Activated CD4-positive, alpha-beta T cell treated with anti-CD3 and anti-CD28 coated beads, Interleukin-2, amount 10 ng/mL, durations not matched to agents 24 days and 14 days (primary cell): ENCODE measurements at regions of chr5 and their contacts with region 1.

Region 1: DNA sequence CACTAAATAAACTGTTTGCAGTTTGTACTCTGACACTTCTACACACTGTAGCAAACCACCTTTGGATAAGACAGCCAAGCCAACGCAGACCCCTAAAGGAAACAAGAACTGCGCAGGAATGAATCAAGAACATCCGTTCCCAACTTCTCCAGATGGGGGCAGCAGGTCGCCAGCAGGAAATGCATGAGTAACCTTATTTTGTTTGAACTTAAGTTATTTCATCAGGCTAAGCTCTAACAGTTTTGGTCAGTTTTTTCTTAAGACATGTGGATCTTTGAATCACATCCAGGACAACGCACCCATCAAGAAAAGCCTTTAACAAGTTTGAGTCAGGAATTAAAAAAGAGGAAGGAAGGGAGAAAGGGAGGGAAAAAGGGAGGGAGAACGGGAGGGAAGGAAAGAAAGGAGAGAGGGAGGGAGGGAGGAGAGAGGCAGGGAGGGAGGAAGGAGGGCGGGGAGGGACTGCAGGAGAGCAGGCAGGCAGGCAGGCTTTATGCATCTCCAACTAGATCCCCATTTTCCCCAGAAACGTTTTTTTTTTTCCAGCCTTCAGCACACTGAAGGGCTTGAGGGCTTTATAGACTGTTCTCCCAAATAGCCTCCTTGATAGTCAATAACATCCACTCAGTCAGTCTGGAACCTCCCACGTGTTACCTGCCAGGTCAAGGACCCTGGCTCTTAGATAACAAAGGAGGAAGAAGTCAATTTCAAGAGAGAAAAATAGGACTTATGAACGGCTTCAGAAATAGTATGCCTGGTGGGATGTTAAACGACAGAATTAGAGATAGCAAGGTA is 22.2 kb downstream of the BHMT start:
- DNase-seq: peak; percentile 88
- H3K4me3 Mint-ChIP-seq: peak overlapping the region; percentile 41
- H3K27ac Mint-ChIP-seq: peak overlapping the region; percentile 69
- H3K4me1 Mint-ChIP-seq: peaks cover 5% of the 10 kb centered on the region
- H3K27me3 Mint-ChIP-seq: peaks cover 1% of the 10 kb centered on the region

Region 2: DNA sequence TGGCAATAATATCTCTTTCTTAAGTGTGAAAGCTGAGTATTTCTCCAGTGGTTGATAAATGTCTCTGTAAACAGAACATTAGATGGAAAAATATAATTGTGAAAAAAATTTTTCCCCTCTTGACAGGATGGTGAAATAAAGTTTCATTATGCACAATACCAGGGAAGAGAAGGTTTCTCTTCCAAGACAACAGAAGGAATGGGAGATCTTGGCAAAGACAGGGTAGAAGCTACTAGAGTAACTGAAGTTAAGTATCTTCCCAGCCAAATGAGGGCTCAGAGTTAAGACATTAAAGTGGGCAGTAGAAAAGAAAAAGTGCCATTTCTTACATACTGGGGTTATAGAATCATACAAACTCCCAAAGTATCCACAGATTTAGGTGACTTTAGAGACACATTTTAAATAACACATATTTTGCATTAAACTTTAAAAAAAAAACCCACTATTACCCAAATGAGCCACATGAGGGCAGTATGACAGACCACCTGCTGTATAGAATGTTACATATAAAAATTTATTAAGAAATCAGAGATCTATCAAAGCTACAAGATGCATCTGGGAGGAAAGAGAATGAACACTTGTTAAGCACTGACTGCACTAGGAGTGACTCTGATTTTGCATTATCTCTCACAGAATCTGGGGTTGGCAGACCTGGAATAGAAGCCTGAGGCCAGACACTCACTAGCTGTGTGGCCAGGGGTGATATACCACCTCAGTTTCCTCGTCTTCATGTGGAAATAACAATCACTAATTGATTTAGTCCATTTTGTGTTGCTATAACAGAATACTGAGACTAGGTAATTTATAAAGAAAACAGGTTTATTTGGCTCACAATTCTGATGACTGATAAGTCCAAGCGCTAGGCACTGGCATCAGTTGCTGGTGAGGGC is 247.3 kb before region 1 on chr5:
- intact Hi-C with region 1: loop called (anchors 5 kb)
- DNase-seq: no peak
- H3K4me3 Mint-ChIP-seq: no peak overlapping the region
- H3K27ac Mint-ChIP-seq: no peak overlapping the region
- H3K4me1 Mint-ChIP-seq: peaks cover 9% of the 10 kb centered on the region
- H3K27me3 Mint-ChIP-seq: peaks cover 2% of the 10 kb centered on the region

Region 3: DNA sequence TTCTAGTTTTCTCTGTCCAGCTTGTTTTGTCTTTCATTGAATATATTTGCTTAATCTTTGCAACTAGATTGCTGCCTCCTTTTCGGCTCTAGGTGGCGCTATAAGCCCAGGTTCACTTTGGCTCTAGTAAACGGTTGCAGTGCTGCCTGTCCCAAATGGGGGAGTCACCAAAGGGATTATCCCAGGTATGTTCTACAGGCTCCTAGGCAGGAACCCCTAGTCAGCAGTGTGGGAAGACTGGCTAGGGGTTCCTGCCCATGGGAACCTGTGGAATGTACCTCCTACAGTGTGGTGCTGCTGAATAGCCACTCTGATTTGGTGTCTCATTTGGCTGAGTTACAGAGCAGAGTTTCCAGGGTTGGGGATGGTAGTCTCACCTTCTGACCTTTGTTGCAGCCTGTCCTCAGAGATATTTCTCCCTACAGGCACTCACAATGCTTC is 233.9 kb before region 1 on chr5:
- intact Hi-C with region 1: loop called (anchors 2 kb)
- DNase-seq: peak; percentile 78
- H3K4me3 Mint-ChIP-seq: no peak overlapping the region
- H3K27ac Mint-ChIP-seq: no peak overlapping the region
- H3K4me1 Mint-ChIP-seq: no peaks in the 10 kb centered on the region
- H3K27me3 Mint-ChIP-seq: no peaks in the 10 kb centered on the region

Region 4: DNA sequence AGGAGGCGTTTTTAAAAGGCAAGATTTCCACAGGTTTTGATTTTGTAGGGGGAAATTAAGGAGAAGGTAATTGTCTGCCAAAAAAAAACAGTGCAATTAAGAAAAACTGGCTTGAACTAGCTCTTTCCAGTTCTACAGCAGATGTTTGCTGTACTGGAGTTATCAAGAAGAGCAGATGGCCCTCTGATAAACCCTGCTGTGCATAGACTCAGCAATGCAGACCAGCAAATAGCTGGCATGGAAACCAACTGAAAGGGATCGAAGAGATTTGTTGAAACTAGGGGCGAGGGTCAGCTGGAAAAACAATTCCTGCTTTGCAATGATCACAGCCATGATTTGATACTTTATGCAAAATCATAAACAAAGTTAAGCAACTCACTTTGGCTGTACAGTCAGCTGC is 40.1 kb before region 1 on chr5:
- intact Hi-C with region 1: no loop called
- DNase-seq: no peak
- H3K4me3 Mint-ChIP-seq: no peak overlapping the region
- H3K27ac Mint-ChIP-seq: no peak overlapping the region
- H3K4me1 Mint-ChIP-seq: no peaks in the 10 kb centered on the region
- H3K27me3 Mint-ChIP-seq: peaks cover 10% of the 10 kb centered on the region

Region 5: GRCh38 chr5:79464695-79465332 is 331.0 kb after region 1 on chr5:
- intact Hi-C with region 1: loop called (anchors 1 kb)
- DNase-seq: no peak
- H3K4me3 Mint-ChIP-seq: no peak overlapping the region
- H3K27ac Mint-ChIP-seq: no peak overlapping the region
- H3K4me1 Mint-ChIP-seq: peaks cover 4% of the 10 kb centered on the region
- H3K27me3 Mint-ChIP-seq: peaks cover 7% of the 10 kb centered on the region